Activated T-helper 2 cell treated with anti-CD3 and anti-CD28 coated beads, Interferon-gamma antibody, Interleukin-2, Interleukin-4, amounts not matched to agents 10 μg/mL and 5 μg/mL and 100 μg/mL, durations not matched to agents 14 hours and 24 hours and 36 hours (primary cell): ENCODE measurements at regions of chr19 and their contacts with region 1.

Region 1: DNA sequence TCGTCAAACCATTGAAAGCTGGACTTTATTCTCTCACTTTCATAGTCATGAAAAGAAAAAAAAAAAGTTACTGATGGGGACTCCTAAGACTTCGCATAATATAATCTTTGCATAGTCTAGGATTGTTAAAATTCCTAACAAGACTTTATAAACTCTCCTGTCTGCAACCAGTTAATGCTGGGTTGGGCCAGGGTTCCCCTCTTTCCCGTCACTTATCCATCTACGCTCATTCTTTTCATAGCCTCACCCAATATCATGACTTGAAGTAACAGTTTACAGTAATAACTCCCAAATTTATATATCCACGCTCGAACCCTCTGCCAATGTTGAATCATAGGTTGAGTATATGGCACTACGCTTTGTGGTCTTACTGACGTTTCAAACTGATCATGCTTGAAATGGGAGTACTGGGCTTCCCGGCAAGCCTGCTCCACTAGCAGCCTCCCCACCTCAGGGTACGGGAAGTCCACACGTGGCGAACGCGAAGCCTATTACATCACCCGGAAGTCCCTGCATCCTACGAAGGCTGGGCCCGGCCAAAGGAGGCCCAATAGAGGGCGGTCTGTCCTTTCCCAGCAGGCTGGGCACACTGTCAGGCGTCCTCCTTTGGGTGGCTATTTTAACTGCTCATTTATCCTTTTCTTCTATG is 743 bp upstream of the ZNF460 start:
- DNase-seq: peak; percentile 73
- H3K4me3 Mint-ChIP-seq: peak overlapping the region; percentile 15
- H3K27ac Mint-ChIP-seq: no peak overlapping the region
- H3K4me1 Mint-ChIP-seq: peaks cover 21% of the 10 kb centered on the region
- H3K27me3 Mint-ChIP-seq: no peaks in the 10 kb centered on the region

Region 2: DNA sequence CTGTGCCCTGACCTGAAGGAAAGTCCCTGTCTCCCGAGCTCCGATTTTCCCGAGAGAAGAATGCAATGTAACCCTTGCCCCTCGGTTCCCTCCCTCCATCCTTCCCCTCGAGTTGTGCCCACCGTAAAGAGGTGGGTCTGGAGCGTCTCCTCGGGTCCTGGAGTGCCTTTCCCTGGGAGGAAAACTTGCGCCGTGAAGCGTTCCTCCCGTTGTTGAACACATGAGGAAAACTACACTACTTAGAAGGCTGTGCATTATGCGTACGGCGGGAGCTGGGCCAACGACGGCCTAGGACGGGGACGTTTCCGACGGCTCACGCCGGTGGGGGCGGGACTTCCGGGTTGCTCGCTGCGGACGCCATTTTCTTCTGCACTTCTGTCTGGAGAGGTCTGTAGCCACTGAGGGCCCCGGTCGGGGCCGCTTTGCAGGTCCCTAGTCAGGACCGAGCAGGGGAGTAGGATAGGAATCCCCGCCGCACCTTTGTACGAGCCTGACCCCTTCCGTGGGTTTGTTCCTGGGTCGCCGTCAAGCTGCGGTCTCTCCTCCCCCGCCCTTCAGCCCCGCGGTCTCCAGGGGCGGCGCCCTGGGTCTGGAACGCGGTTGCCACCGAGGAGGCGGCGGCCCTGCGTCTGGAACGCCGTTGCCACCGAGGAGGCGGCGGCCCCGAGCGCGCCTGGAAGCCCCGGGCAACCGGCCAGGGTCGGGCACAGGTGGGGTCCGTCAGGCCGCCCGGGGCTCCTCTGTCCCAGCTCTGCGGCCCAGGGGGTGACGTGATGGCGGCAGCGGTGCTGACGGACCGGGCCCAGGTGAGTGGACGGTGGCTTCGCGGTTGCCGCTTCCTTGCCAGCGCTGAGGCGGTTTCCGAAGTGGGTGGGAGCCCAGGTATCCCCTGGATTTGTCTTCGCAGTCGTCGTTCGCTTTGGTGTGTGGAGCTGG is 88.1 kb before region 1 on chr19 and contains the start of gene ZNF264:
- intact Hi-C with region 1: loop called (anchors 5 kb)
- DNase-seq: peak; percentile 84
- H3K4me3 Mint-ChIP-seq: peak within 1 kb of the TSS; percentile 91
- H3K27ac Mint-ChIP-seq: peak within 1 kb of the TSS; percentile 83
- H3K4me1 Mint-ChIP-seq: peaks cover 19% of the 10 kb centered on the region
- H3K27me3 Mint-ChIP-seq: no peaks in the 10 kb centered on the region
- total RNA-seq, gene ZNF264: 16.5 and 18.0 TPM in 2 replicates

Region 3: DNA sequence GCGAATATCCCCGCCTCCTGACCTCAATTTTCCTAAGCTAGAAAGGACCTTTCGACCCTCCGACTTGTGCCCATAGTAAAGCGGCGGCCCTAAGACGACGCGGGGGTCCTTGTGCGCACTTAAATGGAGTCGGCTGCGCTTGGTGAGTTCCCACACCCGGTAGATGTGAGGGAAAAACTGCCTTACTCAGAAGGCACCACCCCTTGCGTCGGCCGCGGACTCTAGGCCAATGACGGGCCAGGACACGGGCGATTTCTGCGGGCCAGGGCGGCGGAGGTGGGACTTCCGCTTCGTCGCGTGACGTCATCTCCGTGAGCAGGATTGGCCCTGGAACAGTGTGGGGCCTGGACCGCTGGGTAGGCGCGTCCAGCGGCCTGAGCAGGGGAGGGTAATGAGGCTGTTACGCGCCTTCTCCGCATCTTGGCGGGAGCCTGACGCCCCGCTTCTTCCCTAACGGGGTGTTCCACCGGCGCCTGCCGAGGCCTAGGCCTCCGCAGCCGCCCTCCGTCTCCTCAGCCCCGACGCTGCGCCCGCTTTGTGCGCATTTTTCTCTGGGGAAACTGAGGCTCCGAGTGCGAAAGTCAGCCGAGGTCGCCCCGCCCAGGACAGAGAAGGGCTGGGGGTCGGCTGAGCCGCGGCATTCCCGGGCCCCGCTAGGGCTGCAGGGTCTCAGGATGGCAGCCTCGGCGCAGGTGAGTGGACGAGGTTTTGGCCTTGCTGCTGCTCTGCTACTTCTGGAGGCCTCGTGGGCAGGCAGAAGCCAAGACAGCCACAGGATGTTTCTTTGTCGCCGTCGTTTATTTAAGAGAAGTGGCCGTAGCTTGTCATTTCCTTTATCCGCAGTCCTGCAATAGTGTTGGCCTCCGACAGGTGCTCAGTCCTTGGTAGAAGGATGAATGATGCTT is 40.9 kb after region 1 on chr19 and contains the start of gene ZNF543:
- intact Hi-C with region 1: loop called (anchors 1 kb)
- DNase-seq: peak; percentile 89
- H3K4me3 Mint-ChIP-seq: peak within 1 kb of the TSS; percentile 85
- H3K27ac Mint-ChIP-seq: peak within 1 kb of the TSS; percentile 91
- H3K4me1 Mint-ChIP-seq: peaks cover 25% of the 10 kb centered on the region
- H3K27me3 Mint-ChIP-seq: peaks cover 11% of the 10 kb centered on the region
- total RNA-seq, gene ZNF543: 4.6 and 5.1 TPM in 2 replicates

Region 4: DNA sequence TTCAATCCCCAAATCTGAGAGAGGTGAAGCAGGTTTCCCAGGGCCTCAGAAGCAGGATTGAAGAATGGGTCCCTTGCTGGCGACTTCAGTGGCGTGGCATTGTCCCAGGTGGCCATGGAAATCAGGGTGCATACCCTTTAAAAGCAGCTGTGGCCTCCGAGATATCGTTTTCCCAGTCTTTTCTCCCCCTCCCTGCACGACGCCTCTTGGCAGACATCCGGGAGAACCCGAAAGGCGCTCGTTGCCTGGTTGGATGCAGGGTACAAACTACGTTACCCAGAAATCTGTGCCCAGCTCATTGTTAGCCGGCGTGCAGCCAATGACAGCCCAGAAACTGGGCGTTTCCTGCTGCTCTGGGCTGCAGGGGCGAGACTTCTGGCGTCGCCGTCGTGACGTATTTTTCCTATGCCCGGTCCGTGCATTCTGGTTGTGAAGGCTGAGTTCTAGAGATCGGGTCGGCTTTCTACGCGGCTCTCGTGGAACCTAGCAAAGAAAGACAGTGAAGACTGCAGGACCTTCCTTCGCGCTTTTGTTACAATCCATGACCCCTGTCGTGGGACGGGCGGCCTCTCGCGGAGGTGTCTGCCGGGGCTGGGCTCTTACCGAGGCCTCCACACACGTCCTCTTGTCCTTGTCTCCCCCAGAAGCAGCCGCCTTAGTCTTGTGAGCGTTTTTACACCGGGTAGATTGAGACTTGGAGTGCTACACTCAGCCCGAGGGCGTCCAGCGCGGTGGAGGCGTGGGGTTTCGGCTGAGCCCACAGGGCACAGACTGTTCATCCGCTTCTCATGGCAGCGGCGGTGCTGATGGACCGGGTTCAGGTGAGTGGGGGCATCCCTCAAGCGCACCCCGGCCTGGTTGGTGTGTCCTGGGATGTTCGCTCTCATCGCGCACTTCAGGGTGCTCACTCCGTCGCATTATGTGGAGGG is 71.6 kb after region 1 on chr19 and contains the start of gene ZNF304:
- intact Hi-C with region 1: loop called (anchors 1 kb)
- DNase-seq: peak; percentile 83
- H3K4me3 Mint-ChIP-seq: peak within 1 kb of the TSS; percentile 92
- H3K27ac Mint-ChIP-seq: peak within 1 kb of the TSS; percentile 86
- H3K4me1 Mint-ChIP-seq: peaks cover 25% of the 10 kb centered on the region
- H3K27me3 Mint-ChIP-seq: no peaks in the 10 kb centered on the region
- total RNA-seq, gene ZNF304: 5.2 and 6.5 TPM in 2 replicates